A673 (cell line): ENCODE measurements at regions of chr14 and their contacts with region 1.

Region 1: GRCh38 chr14:105944632-105945610 is 418.5 kb downstream of the TMEM121 start:
- DNase-seq: peak; percentile 81
- H3K4me3 ChIP-seq: no peak overlapping the region
- H3K27ac ChIP-seq: no peak overlapping the region
- H3K4me1 ChIP-seq: no peaks in the 10 kb centered on the region
- H3K27me3 ChIP-seq: peaks cover 19% of the 10 kb centered on the region
- CTCF ChIP-seq: peak; percentile 90

Region 2: DNA sequence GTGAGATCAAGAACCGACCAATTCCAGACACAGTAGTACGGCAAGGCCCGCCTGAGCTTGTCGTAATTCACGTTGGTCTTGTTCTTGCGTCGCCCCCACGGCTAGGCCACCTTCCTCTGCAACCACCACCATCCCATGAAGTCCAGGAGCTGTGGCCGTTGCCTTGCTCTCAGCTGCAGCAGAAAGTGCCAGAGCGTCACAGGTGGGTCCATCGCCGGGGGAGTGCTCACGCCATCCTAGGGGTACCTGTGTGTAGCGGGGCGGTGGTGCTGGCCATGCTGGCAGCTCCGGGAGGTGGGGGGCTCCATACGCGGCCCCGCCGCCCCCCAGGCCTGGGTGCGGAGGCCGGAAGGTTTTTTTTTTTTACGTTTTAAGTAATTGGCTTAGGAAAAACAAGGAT is 395.4 kb before region 1 on chr14:
- CTCF ChIA-PET with region 1: no interaction called
- POLR2A ChIA-PET with region 1: no interaction called
- intact Hi-C with region 1: loop called (anchors 10 kb)
- DNase-seq: no peak
- H3K4me3 ChIP-seq: no peak overlapping the region
- H3K27ac ChIP-seq: no peak overlapping the region
- H3K4me1 ChIP-seq: no peaks in the 10 kb centered on the region
- H3K27me3 ChIP-seq: no peaks in the 10 kb centered on the region
- CTCF ChIP-seq: no peak

Region 3: GRCh38 chr14:105879867-105880561 is 64.9 kb before region 1 on chr14:
- CTCF ChIA-PET with region 1: no interaction called
- POLR2A ChIA-PET with region 1: no interaction called
- intact Hi-C with region 1: no loop called
- DNase-seq: no peak
- H3K4me3 ChIP-seq: no peak overlapping the region
- H3K27ac ChIP-seq: no peak overlapping the region
- H3K4me1 ChIP-seq: no peaks in the 10 kb centered on the region
- H3K27me3 ChIP-seq: peaks cover 55% of the 10 kb centered on the region
- CTCF ChIP-seq: no peak

Region 4: GRCh38 chr14:105926373-105927095 is 18.4 kb before region 1 on chr14:
- CTCF ChIA-PET with region 1: no interaction called
- POLR2A ChIA-PET with region 1: no interaction called
- intact Hi-C with region 1: no loop called
- DNase-seq: no peak
- H3K4me3 ChIP-seq: no peak overlapping the region
- H3K27ac ChIP-seq: no peak overlapping the region
- H3K4me1 ChIP-seq: no peaks in the 10 kb centered on the region
- H3K27me3 ChIP-seq: peaks cover 12% of the 10 kb centered on the region
- CTCF ChIP-seq: no peak